Right cardiac atrium (tissue), 5 donors: ENCODE measurements at regions of chr15 and their contacts with region 1.

Region 1: DNA sequence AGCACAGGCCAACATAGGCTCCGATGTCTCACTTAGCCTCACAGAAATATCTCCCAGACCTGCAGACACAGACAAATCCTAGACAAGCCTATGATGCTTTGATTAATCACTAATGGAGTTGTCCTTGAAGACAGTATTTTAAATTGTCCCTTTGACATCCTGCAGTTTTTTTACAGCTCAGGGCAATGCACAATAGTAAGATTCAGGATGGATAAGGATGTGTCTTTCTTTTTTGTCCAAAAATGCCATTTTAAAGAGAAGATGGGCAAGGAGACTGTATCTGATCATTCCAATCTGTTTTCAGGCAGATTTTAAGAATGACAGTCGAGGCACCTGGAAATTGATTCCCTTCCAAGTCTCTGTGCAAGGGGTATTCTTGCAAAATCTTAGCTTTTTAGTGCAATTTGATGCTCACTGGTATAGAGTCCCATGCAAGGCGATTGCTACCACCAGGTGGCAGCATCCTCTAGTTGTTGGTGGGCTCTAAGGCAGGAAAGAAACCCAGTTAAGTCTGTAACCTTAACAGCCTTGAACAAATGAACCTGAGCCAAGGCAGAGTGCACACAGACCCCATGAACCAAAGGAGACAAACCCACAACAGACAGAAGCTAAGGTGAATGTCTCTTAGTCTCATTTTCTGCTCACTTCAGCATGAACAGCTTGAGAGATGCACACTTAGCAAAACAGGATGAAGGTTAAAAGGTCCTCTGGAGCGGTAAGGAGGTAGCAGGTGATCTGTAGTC is 51.2 kb upstream of the MINAR1 start:
- DNase-seq: peak; percentile 73 to 94 (median 87)
- ATAC-seq: peak; percentile 87 to 89
- H3K4me3 ChIP-seq: no peak overlapping the region
- H3K27ac ChIP-seq: no peak overlapping the region
- H3K4me1 ChIP-seq: no peaks in the 10 kb centered on the region
- H3K27me3 ChIP-seq: no peaks in the 10 kb centered on the region

Region 2: GRCh38 chr15:79596051-79596507 is 215.2 kb after region 1 on chr15:
- intact Hi-C with region 1: loop called in 2 of 4 experiments (anchors 5 to 10 kb)
- DNase-seq: peak in 1 of 3 donors; percentile 24
- ATAC-seq: peak; percentile 80 to 81
- H3K4me3 ChIP-seq: no peak overlapping the region
- H3K27ac ChIP-seq: no peak overlapping the region
- H3K4me1 ChIP-seq: no peaks in the 10 kb centered on the region
- H3K27me3 ChIP-seq: no peaks in the 10 kb centered on the region

Region 3: GRCh38 chr15:79853458-79854328 is 472.8 kb after region 1 on chr15:
- intact Hi-C with region 1: loop called (anchors 2 to 10 kb)
- DNase-seq: peak; percentile 52 to 68 (median 65)
- ATAC-seq: peak; percentile 86 to 97
- H3K4me3 ChIP-seq: no peak overlapping the region
- H3K27ac ChIP-seq: no peak overlapping the region
- H3K4me1 ChIP-seq: no peaks in the 10 kb centered on the region
- H3K27me3 ChIP-seq: no peaks in the 10 kb centered on the region

Region 4: GRCh38 chr15:79989682-79990081 is 608.8 kb after region 1 on chr15:
- intact Hi-C with region 1: loop called in 1 of 4 experiments (anchors 10 kb)
- DNase-seq: no peak
- ATAC-seq: no peak
- H3K4me3 ChIP-seq: no peak overlapping the region
- H3K27ac ChIP-seq: no peak overlapping the region
- H3K4me1 ChIP-seq: no peaks in the 10 kb centered on the region
- H3K27me3 ChIP-seq: no peaks in the 10 kb centered on the region